Activated CD4-positive, alpha-beta T cell treated with anti-CD3 and anti-CD28 coated beads for 36 hours (primary cell): ENCODE measurements at regions of chr20 and their contacts with region 1.

Region 1: DNA sequence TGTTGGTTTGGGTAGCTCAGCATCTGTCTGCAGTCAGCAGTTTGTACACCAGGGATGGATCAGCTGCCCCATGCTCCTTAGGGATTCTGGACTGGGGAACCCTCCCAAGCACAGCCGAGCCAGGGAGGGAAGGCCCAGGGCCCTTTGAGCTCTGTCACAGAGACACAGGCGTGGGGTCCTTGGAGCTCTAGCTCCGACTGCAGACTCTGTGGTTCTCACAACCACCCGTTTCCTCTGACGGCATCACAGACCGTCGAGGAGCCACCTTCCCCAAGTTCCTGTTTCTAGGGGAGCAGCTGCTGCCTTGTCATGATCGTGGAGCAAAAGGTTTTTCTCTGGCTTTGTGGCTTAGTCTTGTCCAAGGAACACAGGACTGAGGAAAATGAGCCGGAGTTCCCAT is at the start of gene SLA2:
- DNase-seq: peak; percentile 79
- ATAC-seq: peak; percentile 62
- H3K4me3 Mint-ChIP-seq: peak within 1 kb of the TSS; percentile 81
- H3K27ac Mint-ChIP-seq: peak within 1 kb of the TSS; percentile 99
- H3K4me1 Mint-ChIP-seq: peaks cover 41% of the 10 kb centered on the region
- H3K27me3 Mint-ChIP-seq: no peaks in the 10 kb centered on the region
- total RNA-seq, gene SLA2: 48.7 to 52.6 TPM

Region 2: GRCh38 chr20:36605399-36606157 is 40.4 kb before region 1 on chr20 and contains the start of gene RAB5IF:
- CTCF ChIA-PET with region 1: interaction called, 12 read pairs
- POLR2A ChIA-PET with region 1: interaction called, 8 read pairs
- intact Hi-C with region 1: loop called (anchors 1 to 2 kb)
- DNase-seq: peak; percentile 100
- ATAC-seq: peak; percentile 91
- H3K4me3 Mint-ChIP-seq: peak within 1 kb of the TSS; percentile 100
- H3K27ac Mint-ChIP-seq: peak within 1 kb of the TSS; percentile 96
- H3K4me1 Mint-ChIP-seq: peaks cover 17% of the 10 kb centered on the region
- H3K27me3 Mint-ChIP-seq: no peaks in the 10 kb centered on the region
- total RNA-seq, gene RAB5IF: 71.7 to 90.2 TPM

Region 3: GRCh38 chr20:36613974-36614373 is 32.0 kb before region 1 on chr20:
- CTCF ChIA-PET with region 1: interaction called, 8 read pairs
- POLR2A ChIA-PET with region 1: no interaction called
- intact Hi-C with region 1: loop called in 1 of 2 experiments (anchors 2 kb)
- DNase-seq: no peak
- ATAC-seq: no peak
- H3K4me3 Mint-ChIP-seq: no peak overlapping the region
- H3K27ac Mint-ChIP-seq: peak overlapping the region; percentile 39
- H3K4me1 Mint-ChIP-seq: peaks cover 3% of the 10 kb centered on the region
- H3K27me3 Mint-ChIP-seq: no peaks in the 10 kb centered on the region

Region 4: GRCh38 chr20:36629719-36630681 is 16.0 kb before region 1 on chr20:
- CTCF ChIA-PET with region 1: interaction called, 4 read pairs
- POLR2A ChIA-PET with region 1: no interaction called
- intact Hi-C with region 1: loop called in 1 of 2 experiments (anchors 2 kb)
- DNase-seq: peak; percentile 73
- ATAC-seq: peak; percentile 93
- H3K4me3 Mint-ChIP-seq: peak overlapping the region; percentile 52
- H3K27ac Mint-ChIP-seq: peak overlapping the region; percentile 98
- H3K4me1 Mint-ChIP-seq: peaks cover 39% of the 10 kb centered on the region
- H3K27me3 Mint-ChIP-seq: no peaks in the 10 kb centered on the region

Region 5: GRCh38 chr20:36717657-36718056 is 71.7 kb after region 1 on chr20:
- CTCF ChIA-PET with region 1: no interaction called
- POLR2A ChIA-PET with region 1: no interaction called
- intact Hi-C with region 1: loop called in 1 of 2 experiments (anchors 1 kb)
- DNase-seq: peak; percentile 17
- ATAC-seq: no peak
- H3K4me3 Mint-ChIP-seq: no peak overlapping the region
- H3K27ac Mint-ChIP-seq: no peak overlapping the region
- H3K4me1 Mint-ChIP-seq: peaks cover 11% of the 10 kb centered on the region
- H3K27me3 Mint-ChIP-seq: no peaks in the 10 kb centered on the region

Region 6: GRCh38 chr20:36745927-36746659 is 100.1 kb after region 1 on chr20 and contains the start of gene NDRG3:
- CTCF ChIA-PET with region 1: no interaction called
- POLR2A ChIA-PET with region 1: no interaction called
- intact Hi-C with region 1: loop called in 1 of 2 experiments (anchors 1 kb)
- DNase-seq: peak; percentile 96
- ATAC-seq: peak; percentile 99
- H3K4me3 Mint-ChIP-seq: peak within 1 kb of the TSS; percentile 81
- H3K27ac Mint-ChIP-seq: peak within 1 kb of the TSS; percentile 87
- H3K4me1 Mint-ChIP-seq: peaks cover 20% of the 10 kb centered on the region
- H3K27me3 Mint-ChIP-seq: no peaks in the 10 kb centered on the region
- total RNA-seq, gene NDRG3: 24.8 to 27.5 TPM